ENCODE measurements at regions of chr3 and their contacts with region 1.

Region 1: GRCh38 chr3:57826245-57826951 is 70.3 kb downstream of the SLMAP start:
- DNase-seq: no peak
- H3K4me3 ChIP-seq: no peak overlapping the region
- H3K27ac ChIP-seq: peak overlapping the region in 1 of 8 donors; percentile 4
- H3K4me1 ChIP-seq: peaks cover 0 to 37% (median 25%) of the 10 kb centered on the region in 6 donors
- H3K27me3 ChIP-seq: no peaks in the 10 kb centered on the region
- CTCF ChIP-seq: peak in 2 of 11 experiments; percentile 15 to 17
- POLR2A ChIP-seq: no peak

Region 2: GRCh38 chr3:57409456-57409855 is 416.9 kb before region 1 on chr3:
- intact Hi-C with region 1: loop called (anchors 10 kb)
- DNase-seq: no peak
- H3K4me3 ChIP-seq: no peak overlapping the region
- H3K27ac ChIP-seq: no peak overlapping the region
- H3K4me1 ChIP-seq: no peaks in the 10 kb centered on the region
- H3K27me3 ChIP-seq: no peaks in the 10 kb centered on the region
- CTCF ChIP-seq: no peak
- POLR2A ChIP-seq: no peak

Region 3: DNA sequence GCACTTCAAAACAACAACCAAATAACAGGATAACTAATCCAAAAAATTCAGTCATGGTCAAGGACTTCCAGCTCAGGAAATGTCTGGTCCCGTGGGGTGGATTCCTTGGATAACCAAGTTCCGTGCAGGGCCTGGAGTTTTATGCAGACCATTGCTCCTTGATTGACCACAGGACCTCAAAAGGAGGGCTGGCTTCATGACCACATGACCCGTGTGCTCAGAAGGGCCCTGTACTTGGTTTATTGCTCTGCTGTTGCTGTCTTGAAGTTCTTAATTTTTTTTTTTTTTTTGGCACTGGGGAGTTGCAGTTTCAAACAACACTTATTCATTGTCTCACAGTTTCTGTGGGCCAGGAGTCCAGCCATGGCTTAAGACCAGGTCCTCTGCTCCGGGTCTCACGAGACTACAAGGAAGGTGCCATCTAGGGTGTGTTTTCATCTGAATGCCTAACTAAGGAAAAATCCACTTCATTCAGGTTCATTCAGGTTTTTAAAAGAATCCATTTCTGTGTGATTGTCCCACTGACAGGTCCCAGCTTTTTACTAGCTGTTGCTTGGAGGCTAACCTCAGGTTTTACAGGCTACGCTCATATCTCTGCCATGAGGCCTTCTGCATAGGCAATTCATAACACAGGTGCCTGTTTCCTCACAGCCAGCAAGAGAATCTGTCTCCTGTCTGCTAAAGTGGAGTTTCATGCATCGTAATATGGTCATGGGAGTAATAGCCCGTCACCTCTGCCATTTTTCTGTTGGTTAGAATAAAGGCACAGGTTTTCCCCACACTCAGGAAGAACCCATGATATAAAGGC is 247.1 kb after region 1 on chr3:
- intact Hi-C with region 1: no loop called
- DNase-seq: no peak
- H3K4me3 ChIP-seq: no peak overlapping the region
- H3K27ac ChIP-seq: peak overlapping the region in 4 of 8 donors; percentile 24 to 45 (median 27)
- H3K4me1 ChIP-seq: peaks cover 10 to 44% (median 27%) of the 10 kb centered on the region in 6 donors
- H3K27me3 ChIP-seq: no peaks in the 10 kb centered on the region
- CTCF ChIP-seq: no peak
- POLR2A ChIP-seq: no peak